Thyroid gland (tissue), 4 donors: ENCODE measurements at regions of chr11 and their contacts with region 1.

Region 1: DNA sequence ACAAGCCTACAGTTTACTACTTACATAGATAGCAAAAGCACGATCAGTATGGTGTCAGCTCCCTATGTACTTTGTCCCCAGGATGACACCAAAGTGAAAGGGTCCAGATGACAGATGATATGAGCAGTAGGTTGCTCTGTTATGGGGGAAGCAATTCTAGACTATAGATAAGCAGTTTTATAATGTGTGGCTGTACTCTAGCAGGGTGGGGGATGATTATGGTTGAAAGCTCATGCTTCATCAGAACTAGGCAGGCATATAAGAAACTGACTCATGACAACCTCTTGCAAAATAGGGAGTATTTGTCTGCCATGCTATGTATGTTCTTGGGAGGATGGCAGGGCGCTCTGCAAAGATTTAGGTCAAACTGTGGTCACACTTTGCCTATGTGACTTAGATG is 158.2 kb upstream of the ZBED5 start:
- DNase-seq: no peak
- H3K4me3 ChIP-seq: no peak overlapping the region
- H3K27ac ChIP-seq: no peak overlapping the region
- H3K4me1 ChIP-seq: no peaks in the 10 kb centered on the region
- H3K27me3 ChIP-seq: no peaks in the 10 kb centered on the region
- CTCF ChIP-seq: no peak
- POLR2A ChIP-seq: no peak

Region 2: GRCh38 chr11:10906513-10906912 is 109.6 kb before region 1 on chr11:
- intact Hi-C with region 1: no loop called
- DNase-seq: no peak
- H3K4me3 ChIP-seq: no peak overlapping the region
- H3K27ac ChIP-seq: no peak overlapping the region
- H3K4me1 ChIP-seq: peaks cover 24 to 35% of the 10 kb centered on the region in 2 donors
- H3K27me3 ChIP-seq: no peaks in the 10 kb centered on the region
- CTCF ChIP-seq: no peak
- POLR2A ChIP-seq: no peak

Region 3: DNA sequence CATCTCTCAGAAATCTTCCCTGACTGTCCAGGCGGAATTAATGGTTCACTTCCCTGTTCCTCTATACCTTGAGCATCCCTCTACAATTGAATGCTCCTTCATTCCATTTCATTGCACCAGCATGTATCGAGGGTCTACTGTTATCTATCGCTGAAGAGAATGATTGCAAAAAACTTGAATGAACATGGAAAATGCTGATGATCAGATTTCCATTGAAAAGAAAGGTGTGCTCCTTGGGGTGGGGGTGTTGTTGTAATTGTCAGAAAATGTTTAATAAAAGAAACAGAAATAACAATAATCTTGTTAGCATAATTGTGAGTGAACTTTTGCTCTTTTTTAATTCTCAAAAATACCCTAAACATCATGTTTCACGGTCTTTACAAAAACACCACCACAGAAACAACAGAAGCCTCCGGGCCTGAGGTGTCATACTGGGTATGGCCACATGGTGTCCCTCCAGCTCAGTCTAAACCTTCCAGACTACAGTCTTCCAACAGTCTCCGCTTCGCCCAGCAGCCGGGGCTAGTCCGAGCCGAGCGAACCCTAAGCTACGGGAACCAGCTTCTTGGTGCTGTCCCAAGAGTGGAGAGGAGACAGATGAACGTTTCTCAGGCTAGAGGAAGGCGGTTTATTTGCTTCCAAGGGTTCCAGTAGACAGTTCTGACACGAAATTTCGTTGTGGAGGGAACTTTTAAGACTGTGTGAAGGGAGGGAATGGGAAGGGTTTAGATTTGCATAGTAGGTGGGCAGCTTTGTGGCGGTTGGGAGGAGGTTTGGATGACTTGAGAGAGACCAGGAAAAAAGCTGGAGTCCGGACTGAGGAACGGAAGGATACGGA is 82.4 kb before region 1 on chr11:
- intact Hi-C with region 1: loop called (anchors 2 kb)
- DNase-seq: peak; percentile 93 to 95
- H3K4me3 ChIP-seq: peak overlapping the region in 2 of 3 donors; percentile 9 to 23
- H3K27ac ChIP-seq: peak overlapping the region; percentile 78 to 82 (median 80)
- H3K4me1 ChIP-seq: peaks cover 22 to 32% of the 10 kb centered on the region in 2 donors
- H3K27me3 ChIP-seq: no peaks in the 10 kb centered on the region
- CTCF ChIP-seq: peak; percentile 89 to 99 (median 98)
- POLR2A ChIP-seq: peak in 1 of 2 donors; percentile 56

Region 4: DNA sequence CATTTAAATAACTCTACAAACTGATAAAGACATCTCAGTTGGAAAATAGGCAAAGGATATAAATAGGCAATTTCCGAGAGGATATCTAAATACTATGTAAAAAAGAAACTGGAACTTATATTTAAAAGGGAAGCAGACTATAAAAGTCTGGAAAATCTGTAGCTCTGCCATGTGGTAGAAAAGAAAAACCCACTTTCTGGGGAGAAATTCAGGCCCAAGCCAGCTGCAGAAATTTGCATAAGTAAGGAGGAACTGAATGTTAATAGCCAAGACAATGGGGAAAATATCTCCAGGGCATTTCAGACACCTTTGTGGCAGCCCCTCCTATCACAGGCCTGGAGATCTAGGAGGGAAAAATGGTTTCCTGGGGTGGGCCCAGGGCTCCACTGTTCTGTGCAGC is 60.5 kb before region 1 on chr11:
- intact Hi-C with region 1: no loop called
- DNase-seq: no peak
- H3K4me3 ChIP-seq: no peak overlapping the region
- H3K27ac ChIP-seq: no peak overlapping the region
- H3K4me1 ChIP-seq: no peaks in the 10 kb centered on the region
- H3K27me3 ChIP-seq: no peaks in the 10 kb centered on the region
- CTCF ChIP-seq: no peak
- POLR2A ChIP-seq: no peak